ENCODE measurements at regions of chr19 and their contacts with region 1.

Region 1: DNA sequence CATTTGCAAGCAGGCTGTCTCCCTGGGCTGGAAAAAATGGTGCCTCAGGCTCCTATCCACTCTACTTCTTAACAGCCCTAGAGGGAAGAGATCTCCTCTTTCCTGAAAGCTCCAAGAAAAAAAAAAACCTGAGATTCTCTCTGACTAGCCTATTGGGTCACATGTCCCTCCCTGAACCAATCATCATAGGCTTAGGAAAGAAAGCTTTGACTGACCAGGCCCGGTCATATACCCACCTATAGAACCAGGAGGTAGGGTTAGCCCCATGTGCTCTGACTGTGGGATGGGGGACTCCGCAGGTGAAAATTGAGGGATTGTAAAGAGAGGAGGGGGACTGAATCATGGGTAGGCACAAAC is 72.8 kb downstream of the MAP4K1 start:
- DNase-seq: no peak
- H3K4me3 ChIP-seq: no peak overlapping the region
- H3K27ac ChIP-seq: no peak overlapping the region
- H3K4me1 ChIP-seq: no peaks in the 10 kb centered on the region
- H3K27me3 ChIP-seq: no peaks in the 10 kb centered on the region
- CTCF ChIP-seq: no peak
- POLR2A ChIP-seq: no peak

Region 2: DNA sequence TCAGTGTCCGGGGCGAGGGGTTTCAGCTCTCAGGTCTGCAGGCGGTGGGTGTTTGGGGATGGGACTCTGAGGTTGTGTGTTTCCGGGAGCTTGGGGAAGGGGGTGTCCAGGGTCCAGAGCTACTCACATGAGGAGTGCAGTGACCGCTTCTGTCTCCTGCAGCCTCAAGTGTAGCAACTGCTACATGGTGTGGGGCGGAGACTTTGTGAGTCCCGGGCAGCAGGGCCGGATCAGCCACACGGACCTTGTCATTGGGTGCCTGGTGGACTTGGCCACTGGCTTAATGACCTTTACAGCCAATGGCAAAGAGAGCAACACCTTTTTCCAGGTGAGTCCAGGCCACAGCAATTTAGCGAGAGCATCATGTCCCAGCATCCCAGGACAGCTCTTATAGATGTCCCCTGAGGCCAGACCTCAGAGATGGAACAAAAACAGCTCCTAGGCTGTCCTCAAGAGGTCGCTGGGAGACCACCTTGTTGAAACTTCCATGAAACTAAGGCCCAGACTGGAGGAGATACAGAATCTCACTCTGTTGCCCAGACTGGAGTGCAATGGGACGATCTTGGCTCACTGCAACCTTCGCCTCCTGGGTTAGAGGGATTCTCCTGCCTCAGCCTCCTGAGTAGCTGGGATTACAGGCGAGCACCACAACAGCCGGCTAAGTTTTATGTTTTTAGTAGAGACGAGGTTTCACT is 66.5 kb before region 1 on chr19:
- intact Hi-C with region 1: no loop called
- DNase-seq: no peak
- H3K4me3 ChIP-seq: no peak overlapping the region
- H3K27ac ChIP-seq: no peak overlapping the region
- H3K4me1 ChIP-seq: no peaks in the 10 kb centered on the region
- H3K27me3 ChIP-seq: no peaks in the 10 kb centered on the region
- CTCF ChIP-seq: no peak
- POLR2A ChIP-seq: no peak

Region 3: GRCh38 chr19:38528213-38528755 is 16.7 kb before region 1 on chr19:
- intact Hi-C with region 1: no loop called
- DNase-seq: no peak
- H3K4me3 ChIP-seq: no peak overlapping the region
- H3K27ac ChIP-seq: no peak overlapping the region
- H3K4me1 ChIP-seq: no peaks in the 10 kb centered on the region
- H3K27me3 ChIP-seq: no peaks in the 10 kb centered on the region
- CTCF ChIP-seq: no peak
- POLR2A ChIP-seq: no peak

Region 4: GRCh38 chr19:38596057-38596981 is 51.4 kb after region 1 on chr19:
- intact Hi-C with region 1: loop called (anchors 5 kb)
- DNase-seq: no peak
- H3K4me3 ChIP-seq: peak overlapping the region in 2 of 3 donors; percentile 15 to 49
- H3K27ac ChIP-seq: no peak overlapping the region
- H3K4me1 ChIP-seq: no peaks in the 10 kb centered on the region
- H3K27me3 ChIP-seq: no peaks in the 10 kb centered on the region
- CTCF ChIP-seq: no peak
- POLR2A ChIP-seq: no peak

Region 5: DNA sequence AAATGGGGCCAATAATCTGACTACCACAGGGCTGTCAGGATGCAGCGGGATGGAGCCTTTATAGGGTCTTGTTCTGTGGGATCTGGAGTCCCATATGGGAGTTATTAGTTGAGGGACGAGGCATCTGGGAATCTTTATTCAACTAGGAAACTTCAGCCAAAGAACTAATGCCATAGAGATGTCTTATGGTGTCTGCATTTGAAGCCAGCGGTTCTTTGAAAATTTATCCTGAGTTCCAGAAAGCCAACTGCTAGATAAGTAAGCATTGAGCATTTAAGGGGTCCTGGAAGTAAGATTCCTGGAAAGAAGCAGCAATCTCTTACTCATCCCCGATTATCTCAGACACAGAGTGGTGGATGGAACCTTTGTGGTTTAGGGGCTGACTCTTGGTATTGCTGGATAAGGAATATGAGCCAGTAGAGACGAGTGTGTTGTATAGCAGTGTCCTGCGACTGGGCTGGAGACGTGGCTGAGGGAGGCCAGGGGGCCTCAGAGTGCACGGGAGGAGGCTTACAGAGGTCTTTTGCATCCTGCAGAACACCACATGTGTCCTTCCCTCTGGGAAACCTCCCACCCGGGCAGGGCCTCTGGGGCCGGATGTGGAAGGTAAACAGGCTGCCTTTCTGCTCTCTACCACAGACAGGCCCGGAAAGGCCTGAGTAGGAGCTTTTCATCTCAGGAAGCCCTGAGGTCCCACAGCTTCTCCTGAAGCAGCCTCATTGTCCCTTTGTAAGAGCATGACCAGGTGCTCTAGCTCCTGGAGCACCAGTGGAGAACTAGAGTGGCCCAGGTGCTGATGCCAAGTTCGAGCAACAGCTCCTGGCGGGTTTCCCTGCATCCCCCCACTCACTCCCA is 131.3 kb after region 1 on chr19:
- intact Hi-C with region 1: no loop called
- DNase-seq: no peak
- H3K4me3 ChIP-seq: peak overlapping the region in 1 of 3 donors; percentile 5
- H3K27ac ChIP-seq: peak overlapping the region; percentile 94 to 99
- H3K4me1 ChIP-seq: peaks cover 5 to 26% of the 10 kb centered on the region in 2 donors
- H3K27me3 ChIP-seq: no peaks in the 10 kb centered on the region
- CTCF ChIP-seq: no peak
- POLR2A ChIP-seq: no peak

Measured in breast epithelium (tissue), 4 donors.